ENCODE measurements at regions of chr12 and their contacts with region 1.

Region 1: GRCh38 chr12:103799870-103800771 is 40.9 kb downstream of the NT5DC3 start:
- DNase-seq: peak; percentile 73 to 94
- H3K4me3 ChIP-seq: peak overlapping the region in 1 of 2 donors; percentile 0
- H3K27ac ChIP-seq: peak overlapping the region; percentile 76 to 80
- H3K4me1 ChIP-seq: peaks cover 0 to 64% (median 44%) of the 10 kb centered on the region in 4 donors
- H3K27me3 ChIP-seq: no peaks in the 10 kb centered on the region
- CTCF ChIP-seq: no peak

Region 2: GRCh38 chr12:103839103-103839502 is 39.0 kb after region 1 on chr12:
- intact Hi-C with region 1: loop called (anchors 5 kb)
- DNase-seq: no peak
- H3K4me3 ChIP-seq: peak overlapping the region; percentile 80 to 87
- H3K27ac ChIP-seq: peak overlapping the region; percentile 89 to 95
- H3K4me1 ChIP-seq: peaks cover 0 to 65% (median 33%) of the 10 kb centered on the region in 4 donors
- H3K27me3 ChIP-seq: no peaks in the 10 kb centered on the region
- CTCF ChIP-seq: no peak